HEK293 (cell line): ENCODE measurements at regions of chr2 and their contacts with region 1.

Region 1: DNA sequence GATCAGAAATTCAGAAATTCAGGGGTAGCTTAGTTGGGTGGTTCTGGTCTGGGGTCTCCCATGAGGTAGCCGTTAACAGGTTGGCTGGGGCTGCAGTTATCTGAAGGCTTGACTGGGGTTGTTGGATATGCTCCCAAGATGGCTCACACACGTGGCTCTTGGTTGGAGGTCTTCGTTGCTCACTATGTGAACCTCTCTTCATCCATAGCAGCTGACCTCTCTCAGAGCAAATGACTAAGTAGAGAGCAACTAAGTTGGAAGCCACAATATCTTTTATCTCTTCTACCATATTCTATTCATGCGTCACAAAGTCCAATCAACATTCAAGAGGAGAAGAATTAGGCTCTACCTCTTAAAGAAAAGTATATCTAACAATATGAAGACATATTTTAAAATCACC is 38.7 kb upstream of the SERTAD2 start:
- H3K4me3 ChIP-seq: no peak overlapping the region
- H3K27ac ChIP-seq: no peak overlapping the region
- H3K4me1 ChIP-seq: peaks cover 16% of the 10 kb centered on the region; the same call in 1 of the 2 replicates
- CTCF ChIP-seq: no peak

Region 2: DNA sequence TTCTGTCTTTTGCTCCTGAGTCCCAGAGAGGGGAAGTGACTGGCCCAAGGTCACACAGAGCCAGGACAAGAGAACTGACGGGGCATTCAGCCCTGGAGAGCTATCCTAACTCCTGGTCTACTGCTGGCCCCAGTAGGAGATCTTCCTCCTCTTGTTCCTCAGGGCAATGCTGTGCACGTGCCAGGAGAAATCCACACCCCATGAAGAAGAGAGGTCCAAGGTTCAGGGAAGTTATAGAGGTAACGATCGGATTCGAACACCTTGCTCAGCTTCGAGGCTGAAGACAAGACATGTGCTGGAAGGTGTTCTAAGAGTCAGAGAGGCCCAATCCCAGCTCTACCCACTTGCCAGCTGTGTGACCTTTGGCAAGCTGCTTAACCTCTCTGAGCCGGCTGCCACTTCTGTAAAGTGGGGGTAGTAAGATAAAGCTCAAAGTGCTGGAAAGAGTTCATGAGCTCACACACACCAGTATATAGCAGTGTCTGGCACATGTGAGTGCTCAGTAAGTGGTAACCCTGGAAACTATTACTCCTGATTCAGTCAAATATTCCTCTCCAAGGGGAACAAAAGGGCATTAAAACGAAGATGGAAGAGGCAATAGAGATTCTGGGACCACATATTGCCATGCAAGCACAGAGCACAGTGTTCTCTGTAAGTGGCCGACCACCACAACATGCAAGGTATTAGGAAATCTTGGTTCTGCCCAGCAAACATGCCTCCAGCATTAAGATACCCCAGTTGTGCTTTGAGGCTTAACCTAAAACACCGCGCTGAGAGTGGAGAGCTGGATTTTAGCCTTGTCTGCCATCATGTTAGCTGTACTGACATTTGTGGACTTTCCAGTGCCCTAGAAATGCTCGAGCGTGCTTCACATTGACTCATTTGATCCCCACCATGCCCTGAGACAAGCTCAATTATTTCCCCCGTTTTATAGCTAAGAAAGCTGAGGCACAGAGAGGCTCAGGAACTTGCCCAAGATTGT is 64.2 kb before region 1 on chr2:
- CTCF ChIA-PET with region 1: no interaction called
- POLR2A ChIA-PET with region 1: interaction called, 11 read pairs
- H3K4me3 ChIP-seq: no peak overlapping the region
- H3K27ac ChIP-seq: no peak overlapping the region
- H3K4me1 ChIP-seq: peaks cover 6% of the 10 kb centered on the region; the same call in 1 of the 2 replicates
- CTCF ChIP-seq: no peak

Region 3: DNA sequence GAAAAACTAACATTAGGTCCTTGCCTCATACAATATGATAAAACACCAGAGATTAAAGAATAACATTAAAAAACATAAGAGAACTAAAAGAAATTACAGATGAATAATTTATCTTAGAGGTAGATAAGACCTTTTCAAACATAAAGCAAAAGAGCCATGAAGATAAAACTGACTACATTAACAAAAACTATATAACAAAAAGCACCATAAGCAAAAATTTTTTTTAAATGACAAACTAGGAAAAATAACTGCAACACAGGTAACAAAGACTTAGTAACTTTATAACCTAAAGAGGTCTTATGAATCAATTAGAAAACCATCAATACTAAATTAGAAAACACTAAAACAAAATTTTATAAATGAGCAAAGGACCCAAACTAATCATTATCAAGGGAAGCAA is 22.4 kb before region 1 on chr2:
- CTCF ChIA-PET with region 1: no interaction called
- POLR2A ChIA-PET with region 1: no interaction called
- H3K4me3 ChIP-seq: no peak overlapping the region
- H3K27ac ChIP-seq: no peak overlapping the region
- H3K4me1 ChIP-seq: peaks cover 14% of the 10 kb centered on the region
- CTCF ChIP-seq: no peak